Left lung (tissue), 14 donors: ENCODE measurements at regions of chr6 and their contacts with region 1.

Region 1: GRCh38 chr6:148037496-148037895 is 305.1 kb upstream of the SASH1 start:
- DNase-seq: no peak
- ATAC-seq: no peak
- H3K4me3 ChIP-seq: no peak overlapping the region
- H3K27ac ChIP-seq: no peak overlapping the region
- H3K4me1 ChIP-seq: no peaks in the 10 kb centered on the region
- H3K27me3 ChIP-seq: no peaks in the 10 kb centered on the region
- CTCF ChIP-seq: no peak

Region 2: DNA sequence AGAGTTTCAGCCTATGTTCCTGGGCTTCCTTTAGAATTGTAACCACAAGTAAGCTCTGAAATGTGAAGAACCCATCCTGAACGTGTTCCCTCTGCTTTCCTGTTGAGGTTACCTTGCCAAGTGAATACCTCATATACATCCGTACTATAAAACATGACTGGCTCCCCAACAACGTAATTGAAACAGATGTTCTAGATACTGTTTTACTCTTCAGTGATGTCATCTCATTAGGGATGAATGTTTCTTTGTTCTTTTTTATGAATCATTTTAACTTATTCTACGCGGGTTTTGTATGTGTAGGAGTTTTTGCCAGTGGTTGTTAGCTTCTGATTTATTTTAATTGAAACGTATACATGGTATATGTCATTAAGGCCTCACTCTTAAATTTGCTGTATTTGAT is 362.2 kb before region 1 on chr6:
- intact Hi-C with region 1: no loop called
- DNase-seq: no peak
- ATAC-seq: no peak
- H3K4me3 ChIP-seq: no peak overlapping the region
- H3K27ac ChIP-seq: no peak overlapping the region
- H3K4me1 ChIP-seq: no peaks in the 10 kb centered on the region
- H3K27me3 ChIP-seq: no peaks in the 10 kb centered on the region
- CTCF ChIP-seq: no peak

Region 3: GRCh38 chr6:147891671-147892070 is 145.8 kb before region 1 on chr6:
- intact Hi-C with region 1: loop called in 1 of 2 experiments (anchors 5 kb)
- DNase-seq: no peak
- ATAC-seq: peak; percentile 41
- H3K4me3 ChIP-seq: no peak overlapping the region
- H3K27ac ChIP-seq: no peak overlapping the region
- H3K4me1 ChIP-seq: no peaks in the 10 kb centered on the region
- H3K27me3 ChIP-seq: no peaks in the 10 kb centered on the region
- CTCF ChIP-seq: no peak

Region 4: DNA sequence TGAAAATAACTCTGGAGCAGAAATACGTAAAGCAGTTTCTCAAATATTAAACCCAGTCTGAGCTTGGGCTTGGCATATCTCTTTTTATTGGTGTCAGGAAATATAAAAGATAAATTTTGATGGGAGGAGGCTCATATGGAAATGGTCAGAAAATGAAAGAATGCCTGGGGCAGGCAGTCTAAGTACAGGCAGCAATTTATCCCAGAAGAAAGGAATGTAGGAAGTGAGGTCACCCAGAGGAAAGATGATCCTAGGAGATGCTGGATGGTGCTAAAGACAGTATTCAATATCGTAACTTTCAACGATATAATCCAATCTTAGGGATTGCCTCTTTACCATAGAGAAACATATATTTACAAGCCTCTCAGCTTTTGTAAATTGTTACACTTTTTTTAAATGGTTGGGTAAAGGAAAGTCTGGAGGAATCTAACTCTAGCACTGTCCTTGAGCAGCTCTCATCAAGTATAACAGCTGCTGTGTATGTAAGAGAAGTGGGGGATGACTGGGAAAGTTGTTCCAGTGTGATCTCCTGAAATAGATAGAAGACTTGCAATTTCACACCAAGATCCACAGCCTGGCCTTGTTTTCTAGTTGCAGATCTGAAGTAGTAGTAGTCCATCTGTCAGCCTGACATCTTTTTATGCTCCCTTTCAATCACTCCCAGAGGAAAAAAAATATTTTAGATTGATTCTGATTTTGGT is 48.3 kb after region 1 on chr6:
- intact Hi-C with region 1: no loop called
- DNase-seq: no peak
- ATAC-seq: no peak
- H3K4me3 ChIP-seq: no peak overlapping the region
- H3K27ac ChIP-seq: no peak overlapping the region
- H3K4me1 ChIP-seq: no peaks in the 10 kb centered on the region
- H3K27me3 ChIP-seq: no peaks in the 10 kb centered on the region
- CTCF ChIP-seq: no peak